ENCODE measurements at regions of chr1 and their contacts with region 1.

Region 1: DNA sequence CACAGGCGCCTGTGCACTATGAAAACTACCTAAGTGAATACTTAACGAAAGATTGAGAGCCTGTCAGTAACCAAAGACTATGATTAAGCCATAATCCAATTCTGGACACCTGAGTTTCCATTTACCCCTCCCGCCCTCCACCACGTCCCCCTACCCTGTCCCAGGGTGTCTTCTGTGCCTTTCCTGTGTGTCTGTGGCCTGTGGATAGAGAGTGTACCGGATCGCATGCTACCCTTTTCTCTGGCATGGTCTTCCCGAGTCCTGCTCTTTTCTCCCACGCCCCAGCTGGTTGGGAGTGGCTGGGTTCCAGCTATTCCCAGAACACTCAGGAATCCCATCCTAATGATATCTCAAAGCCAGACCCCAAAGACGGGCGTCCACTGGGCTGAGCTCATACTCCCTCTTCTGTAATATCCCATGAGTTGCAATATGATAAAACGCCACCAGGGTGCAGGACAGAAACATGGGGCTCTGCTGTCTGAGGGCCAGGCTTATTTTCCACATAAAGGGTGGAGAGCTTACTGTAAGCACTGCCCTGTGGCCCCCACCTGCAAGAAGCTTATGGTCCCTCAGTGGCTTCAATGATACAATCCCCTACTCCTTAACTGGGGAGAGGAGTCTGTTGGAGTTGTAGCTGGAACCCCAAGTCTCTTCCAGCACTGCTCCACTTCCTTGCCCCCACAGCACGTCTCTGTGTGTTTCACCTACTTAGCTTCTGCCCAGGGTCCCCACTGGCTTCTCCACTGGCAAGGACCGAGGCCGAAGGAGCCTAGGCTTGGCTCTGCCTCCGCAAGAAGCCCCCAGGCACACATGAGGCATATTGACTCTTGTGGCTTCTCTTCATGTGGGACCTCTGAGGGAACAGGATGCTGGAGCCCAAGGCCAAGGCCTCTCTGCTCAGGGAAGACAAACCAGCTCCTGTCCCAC is 17.6 kb upstream of the ALX3 start:
- DNase-seq: peak; percentile 64
- H3K4me3 Mint-ChIP-seq: no peak overlapping the region
- H3K27ac Mint-ChIP-seq: no peak overlapping the region
- H3K4me1 Mint-ChIP-seq: peaks cover 11% of the 10 kb centered on the region
- H3K27me3 Mint-ChIP-seq: peaks cover 44% of the 10 kb centered on the region

Region 2: GRCh38 chr1:109947582-109948286 is 140.3 kb before region 1 on chr1:
- CTCF ChIA-PET with region 1: no interaction called
- intact Hi-C with region 1: no loop called
- DNase-seq: no peak
- H3K4me3 Mint-ChIP-seq: no peak overlapping the region
- H3K27ac Mint-ChIP-seq: no peak overlapping the region
- H3K4me1 Mint-ChIP-seq: peaks cover 8% of the 10 kb centered on the region
- H3K27me3 Mint-ChIP-seq: no peaks in the 10 kb centered on the region

Region 3: DNA sequence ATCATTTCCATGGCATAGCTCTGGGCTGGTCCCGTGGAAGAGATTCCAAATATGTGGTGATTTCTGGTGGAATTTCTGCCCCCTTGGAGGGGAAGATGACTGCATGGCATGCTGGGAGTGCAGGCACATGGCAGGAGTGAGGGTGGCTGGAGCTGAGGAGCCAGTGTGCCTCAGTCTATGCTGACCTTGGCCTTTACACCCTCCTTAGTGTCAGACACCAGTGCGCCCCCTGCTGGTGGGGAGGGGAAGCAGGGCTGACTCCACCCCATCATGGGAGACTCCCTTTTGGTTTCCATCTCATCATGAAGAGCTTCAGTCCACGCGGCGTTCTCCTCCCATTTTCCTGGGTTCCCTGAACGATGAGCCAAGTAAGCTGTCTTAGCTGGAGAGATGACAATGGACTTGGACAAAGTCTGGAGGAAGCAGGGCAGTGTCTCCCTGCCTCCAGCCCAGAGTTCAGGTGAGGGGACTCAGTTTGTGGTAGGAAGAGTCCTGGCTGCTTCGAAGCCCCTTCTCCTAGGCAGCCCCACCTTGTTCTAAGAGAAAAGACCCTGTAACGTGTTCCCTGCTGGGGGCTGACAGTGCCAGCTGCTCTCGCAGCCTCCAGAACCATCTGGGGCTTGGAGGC is 27.9 kb before region 1 on chr1:
- CTCF ChIA-PET with region 1: interaction called, 18 read pairs
- intact Hi-C with region 1: no loop called
- DNase-seq: peak; percentile 85
- H3K4me3 Mint-ChIP-seq: no peak overlapping the region
- H3K27ac Mint-ChIP-seq: no peak overlapping the region
- H3K4me1 Mint-ChIP-seq: no peaks in the 10 kb centered on the region
- H3K27me3 Mint-ChIP-seq: no peaks in the 10 kb centered on the region

Region 4: DNA sequence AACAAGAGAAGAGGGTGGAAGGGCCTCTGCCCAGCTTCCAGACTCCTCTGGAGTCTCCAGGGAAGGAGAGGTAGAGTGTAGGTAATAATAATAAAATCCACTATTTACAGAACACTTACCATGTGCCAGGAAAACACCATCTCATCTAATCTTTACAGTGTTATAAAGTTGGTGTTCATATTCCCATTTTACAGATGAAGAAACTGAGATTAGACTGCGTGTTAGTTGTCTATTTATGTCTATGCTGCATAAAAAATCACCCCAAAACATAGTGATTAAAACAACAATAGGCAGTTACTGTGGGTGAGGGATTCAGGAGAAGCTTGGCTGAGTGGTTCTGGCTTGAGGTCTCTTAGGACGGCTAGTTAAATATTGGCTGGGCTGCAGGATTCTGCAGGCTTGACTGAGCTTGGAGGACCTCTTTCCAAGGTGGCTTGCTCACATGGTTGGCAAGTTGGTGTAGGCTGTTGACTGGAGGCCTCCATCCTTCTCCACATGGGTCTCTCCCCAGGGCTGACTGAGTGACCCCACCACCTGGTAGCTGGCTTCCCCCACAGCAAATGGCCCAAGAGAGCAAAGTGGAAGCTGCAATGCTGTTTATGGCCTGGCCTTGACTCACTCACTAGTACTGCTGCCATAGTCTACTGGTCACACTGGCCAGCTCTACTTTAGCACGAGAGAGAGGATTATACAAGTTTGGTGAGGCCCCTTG is 11.1 kb before region 1 on chr1:
- CTCF ChIA-PET with region 1: interaction called, 13 read pairs
- intact Hi-C with region 1: no loop called
- DNase-seq: no peak
- H3K4me3 Mint-ChIP-seq: no peak overlapping the region
- H3K27ac Mint-ChIP-seq: no peak overlapping the region
- H3K4me1 Mint-ChIP-seq: no peaks in the 10 kb centered on the region
- H3K27me3 Mint-ChIP-seq: peaks cover 26% of the 10 kb centered on the region

Region 5: GRCh38 chr1:110106013-110106941 is 18.2 kb after region 1 on chr1:
- CTCF ChIA-PET with region 1: interaction called, 62 read pairs
- intact Hi-C with region 1: loop called (anchors 1 kb)
- DNase-seq: peak; percentile 78
- H3K4me3 Mint-ChIP-seq: no peak overlapping the region
- H3K27ac Mint-ChIP-seq: no peak overlapping the region
- H3K4me1 Mint-ChIP-seq: no peaks in the 10 kb centered on the region
- H3K27me3 Mint-ChIP-seq: peaks cover 2% of the 10 kb centered on the region

Region 6: DNA sequence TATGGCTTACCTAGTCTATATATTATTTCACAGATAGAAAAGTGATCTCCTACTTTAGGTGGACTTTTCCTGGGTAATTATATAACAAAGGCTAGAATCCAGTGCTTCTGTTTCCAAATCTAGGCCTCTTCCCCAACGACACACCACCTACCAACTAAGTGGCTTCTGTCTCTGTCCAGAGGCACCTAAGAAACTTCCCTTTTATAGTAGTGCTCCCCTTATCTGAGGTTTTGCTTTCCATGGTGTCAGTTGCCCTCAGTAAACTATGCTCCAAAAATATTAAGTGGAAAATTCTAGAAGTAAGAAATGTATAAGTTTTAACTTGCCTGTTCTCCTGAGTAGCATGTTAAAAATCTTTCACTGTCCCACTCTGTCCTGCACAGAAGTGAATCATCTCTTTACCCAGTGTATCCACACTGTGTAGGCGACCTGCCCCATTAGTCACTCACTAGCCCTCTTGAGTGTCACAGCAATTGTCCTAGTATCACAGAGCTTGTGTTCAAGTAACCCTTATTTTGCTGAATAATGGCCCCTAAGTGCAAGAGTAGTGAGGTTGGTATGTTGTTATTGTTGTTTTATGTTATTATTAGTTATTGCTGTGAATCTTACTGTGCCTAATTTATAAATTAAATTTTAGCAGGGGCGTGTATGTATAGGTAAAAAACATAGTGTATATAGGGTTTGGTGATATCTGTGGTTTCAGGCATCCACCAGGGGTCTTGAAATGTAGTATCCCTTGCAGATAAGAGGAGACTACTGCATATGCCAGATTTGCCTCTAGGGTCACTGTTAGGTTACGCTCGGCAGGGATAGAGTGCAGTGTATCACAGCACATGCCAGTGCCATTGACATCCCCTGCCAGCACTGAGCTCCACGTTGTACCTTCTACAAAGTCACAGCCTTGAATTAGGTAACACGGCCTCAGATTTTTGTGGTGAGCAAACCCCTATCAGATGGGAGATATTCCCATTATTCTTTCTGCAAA is 770.2 kb after region 1 on chr1:
- CTCF ChIA-PET with region 1: no interaction called
- intact Hi-C with region 1: no loop called
- DNase-seq: no peak
- H3K4me3 Mint-ChIP-seq: no peak overlapping the region
- H3K27ac Mint-ChIP-seq: no peak overlapping the region
- H3K4me1 Mint-ChIP-seq: peaks cover 18% of the 10 kb centered on the region
- H3K27me3 Mint-ChIP-seq: peaks cover 2% of the 10 kb centered on the region